ENCODE measurements at regions of chrX and their contacts with region 1.

Region 1: DNA sequence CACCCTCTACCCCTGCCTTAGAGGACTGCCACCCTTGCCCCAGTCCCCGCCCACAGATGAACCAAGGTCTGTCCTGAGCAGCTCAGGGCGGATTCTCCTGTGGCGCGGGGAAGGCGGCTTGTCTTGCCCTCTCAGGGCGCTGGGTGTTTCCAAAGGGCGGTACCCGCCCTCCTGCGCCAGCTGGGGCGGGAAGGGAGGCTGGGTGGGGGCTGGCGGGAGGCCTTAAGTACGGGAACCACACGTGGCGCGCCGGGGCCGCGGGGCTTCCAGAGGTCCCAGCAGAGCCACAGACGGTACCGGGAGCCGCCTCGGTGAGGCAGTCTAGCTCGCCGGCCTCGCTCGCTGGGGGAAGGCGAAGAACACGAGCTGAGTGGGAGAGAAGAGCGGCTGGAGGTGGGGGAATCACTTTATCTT is 361.1 kb downstream of the MID1IP1 start:
- DNase-seq: peak; percentile 66
- H3K4me3 Mint-ChIP-seq: peak overlapping the region; percentile 39
- H3K27ac Mint-ChIP-seq: peak overlapping the region; percentile 49
- H3K4me1 Mint-ChIP-seq: peaks cover 38% of the 10 kb centered on the region
- H3K27me3 Mint-ChIP-seq: no peaks in the 10 kb centered on the region

Region 2: GRCh38 chrX:39030636-39031035 is 131.7 kb before region 1 on chrX:
- CTCF ChIA-PET with region 1: no interaction called
- POLR2A ChIA-PET with region 1: no interaction called
- intact Hi-C with region 1: no loop called
- DNase-seq: no peak
- H3K4me3 Mint-ChIP-seq: no peak overlapping the region
- H3K27ac Mint-ChIP-seq: no peak overlapping the region
- H3K4me1 Mint-ChIP-seq: no peaks in the 10 kb centered on the region
- H3K27me3 Mint-ChIP-seq: peaks cover 1% of the 10 kb centered on the region

Region 3: GRCh38 chrX:39149761-39150160 is 12.6 kb before region 1 on chrX:
- CTCF ChIA-PET with region 1: interaction called, 12 read pairs
- POLR2A ChIA-PET with region 1: no interaction called
- intact Hi-C with region 1: no loop called
- DNase-seq: peak; percentile 70
- H3K4me3 Mint-ChIP-seq: no peak overlapping the region
- H3K27ac Mint-ChIP-seq: no peak overlapping the region
- H3K4me1 Mint-ChIP-seq: no peaks in the 10 kb centered on the region
- H3K27me3 Mint-ChIP-seq: no peaks in the 10 kb centered on the region

Region 4: DNA sequence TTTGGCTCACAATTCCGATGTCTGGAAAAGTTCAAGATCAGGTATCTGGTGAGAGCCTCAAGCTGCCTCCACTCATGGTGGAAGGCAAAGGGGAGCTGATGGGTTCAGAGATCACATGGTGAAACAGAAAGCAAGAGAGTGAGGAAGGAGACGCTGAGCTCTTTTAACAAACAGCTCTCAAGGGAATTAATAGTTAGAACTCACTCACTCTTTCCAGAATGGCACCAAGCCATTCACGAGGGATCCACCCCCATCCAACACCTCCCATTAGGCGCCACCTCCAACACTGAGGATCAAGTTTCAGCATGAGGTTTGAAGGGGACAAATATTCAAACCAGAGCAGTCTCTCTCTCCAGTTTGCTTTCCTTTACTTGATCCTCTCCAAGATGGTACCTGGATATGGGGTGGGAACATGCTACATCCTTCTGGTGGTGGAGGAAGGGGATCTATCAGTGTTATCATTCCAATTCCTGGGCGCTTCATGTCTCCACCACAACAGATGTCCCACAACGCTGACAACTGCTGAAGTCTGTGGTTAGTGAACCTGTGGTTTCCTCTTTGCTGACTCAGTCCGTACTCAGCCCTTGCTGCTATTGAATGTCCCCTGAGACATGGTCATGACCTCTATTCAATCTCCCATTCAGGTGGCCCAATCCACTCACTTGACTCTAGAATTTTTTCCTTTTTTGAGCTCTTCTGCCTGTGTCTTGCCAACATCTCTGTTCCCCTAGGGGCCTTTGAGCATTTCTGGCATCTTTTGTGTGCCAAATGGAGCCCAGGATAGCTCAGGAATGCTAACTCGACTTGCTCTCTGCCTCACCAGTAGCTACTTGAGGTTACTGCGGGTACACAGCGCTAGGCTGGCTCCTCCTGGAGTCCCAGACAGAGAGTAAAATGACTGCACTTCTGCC is 34.1 kb after region 1 on chrX:
- CTCF ChIA-PET with region 1: interaction called, 6 read pairs
- POLR2A ChIA-PET with region 1: interaction called, 5 read pairs
- intact Hi-C with region 1: loop called (anchors 1 kb)
- DNase-seq: peak; percentile 75
- H3K4me3 Mint-ChIP-seq: peak overlapping the region; percentile 32
- H3K27ac Mint-ChIP-seq: peak overlapping the region; percentile 86
- H3K4me1 Mint-ChIP-seq: peaks cover 49% of the 10 kb centered on the region
- H3K27me3 Mint-ChIP-seq: peaks cover 2% of the 10 kb centered on the region

Region 5: DNA sequence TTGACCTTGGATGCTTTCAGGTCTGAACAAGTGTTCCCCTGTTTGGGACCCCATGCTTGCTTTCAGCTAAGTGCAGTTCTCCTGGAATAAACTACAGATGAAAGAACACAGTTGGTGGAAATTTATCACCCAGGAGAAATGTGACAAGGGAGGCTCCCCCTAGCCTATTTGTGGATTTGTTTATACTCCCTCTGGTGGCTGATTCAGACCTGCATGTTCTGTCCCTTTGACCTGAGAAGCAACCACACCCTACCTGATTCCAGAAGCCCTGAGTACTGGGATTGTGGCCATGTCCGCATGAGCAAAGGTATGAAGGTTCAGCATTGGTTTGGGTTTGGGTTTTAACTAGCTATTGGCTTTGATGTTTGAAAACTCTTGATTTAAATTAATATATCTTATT is 79.9 kb after region 1 on chrX:
- CTCF ChIA-PET with region 1: interaction called, 14 read pairs
- POLR2A ChIA-PET with region 1: no interaction called
- intact Hi-C with region 1: loop called (anchors 1 kb)
- DNase-seq: no peak
- H3K4me3 Mint-ChIP-seq: no peak overlapping the region
- H3K27ac Mint-ChIP-seq: no peak overlapping the region
- H3K4me1 Mint-ChIP-seq: peaks cover 14% of the 10 kb centered on the region
- H3K27me3 Mint-ChIP-seq: no peaks in the 10 kb centered on the region

Region 6: DNA sequence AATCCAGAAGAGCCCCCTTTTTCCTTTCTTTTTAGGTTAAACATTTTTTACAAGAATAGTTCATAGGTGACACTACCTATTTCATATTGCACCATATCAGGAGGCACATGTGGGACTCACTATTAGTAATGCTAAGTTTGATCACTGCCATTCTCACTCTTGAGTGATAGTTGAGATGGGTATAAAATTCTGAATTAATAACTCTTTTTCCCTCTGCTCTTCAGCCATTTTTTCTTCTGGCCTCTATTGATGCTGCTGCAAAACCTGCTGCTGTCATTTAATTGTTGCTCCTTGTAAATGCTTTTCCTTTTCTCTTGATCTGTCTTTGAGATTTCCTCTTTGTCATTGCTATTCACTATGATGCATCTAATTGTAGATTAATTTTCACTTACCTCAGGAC is 120.9 kb after region 1 on chrX:
- CTCF ChIA-PET with region 1: no interaction called
- POLR2A ChIA-PET with region 1: no interaction called
- intact Hi-C with region 1: no loop called
- DNase-seq: no peak
- H3K4me3 Mint-ChIP-seq: no peak overlapping the region
- H3K27ac Mint-ChIP-seq: no peak overlapping the region
- H3K4me1 Mint-ChIP-seq: no peaks in the 10 kb centered on the region
- H3K27me3 Mint-ChIP-seq: no peaks in the 10 kb centered on the region

Region 7: GRCh38 chrX:39309018-39309635 is 146.8 kb after region 1 on chrX:
- CTCF ChIA-PET with region 1: interaction called, 4 read pairs
- POLR2A ChIA-PET with region 1: interaction called, 3 read pairs
- intact Hi-C with region 1: loop called (anchors 10 kb)
- DNase-seq: peak; percentile 79
- H3K4me3 Mint-ChIP-seq: no peak overlapping the region
- H3K27ac Mint-ChIP-seq: peak overlapping the region; percentile 100
- H3K4me1 Mint-ChIP-seq: peaks cover 78% of the 10 kb centered on the region
- H3K27me3 Mint-ChIP-seq: no peaks in the 10 kb centered on the region

Region 8: DNA sequence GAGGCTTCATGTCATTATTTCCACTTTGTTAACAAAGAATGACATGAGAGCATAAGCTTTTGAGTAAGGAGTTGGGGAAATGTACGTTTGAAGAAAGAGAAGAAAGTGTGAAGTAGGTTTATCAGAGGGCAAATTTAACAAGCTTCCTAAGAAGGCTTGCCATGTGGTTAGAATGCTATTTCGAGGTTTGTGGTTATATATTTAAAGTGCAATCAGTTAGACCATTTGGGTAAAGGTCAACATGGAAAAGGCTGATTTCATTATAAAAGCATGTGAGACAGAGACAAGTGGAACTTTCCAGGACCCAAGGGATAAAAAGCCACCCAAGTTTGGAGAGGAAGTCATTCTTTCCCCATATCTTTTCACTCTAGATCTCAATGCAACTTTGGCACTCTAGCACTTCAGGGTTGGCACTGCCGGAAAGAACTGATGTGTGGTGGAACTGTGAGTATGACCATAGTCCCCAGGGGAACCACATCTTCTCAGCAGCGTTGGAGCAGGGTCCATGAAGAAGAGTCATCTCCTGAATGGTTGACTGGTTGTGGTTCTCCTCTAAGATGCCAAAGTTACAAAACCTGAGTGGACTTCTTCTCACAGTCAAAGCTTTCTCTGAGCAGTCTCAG is 168.9 kb after region 1 on chrX:
- CTCF ChIA-PET with region 1: no interaction called
- POLR2A ChIA-PET with region 1: no interaction called
- intact Hi-C with region 1: loop called (anchors 5 kb)
- DNase-seq: peak; percentile 73
- H3K4me3 Mint-ChIP-seq: no peak overlapping the region
- H3K27ac Mint-ChIP-seq: peak overlapping the region; percentile 88
- H3K4me1 Mint-ChIP-seq: peaks cover 71% of the 10 kb centered on the region
- H3K27me3 Mint-ChIP-seq: no peaks in the 10 kb centered on the region

Region 9: GRCh38 chrX:39439906-39440798 is 277.8 kb after region 1 on chrX:
- CTCF ChIA-PET with region 1: no interaction called
- POLR2A ChIA-PET with region 1: no interaction called
- intact Hi-C with region 1: loop called (anchors 2 kb)
- DNase-seq: peak; percentile 53
- H3K4me3 Mint-ChIP-seq: peak overlapping the region; percentile 46
- H3K27ac Mint-ChIP-seq: peak overlapping the region; percentile 93
- H3K4me1 Mint-ChIP-seq: peaks cover 40% of the 10 kb centered on the region
- H3K27me3 Mint-ChIP-seq: no peaks in the 10 kb centered on the region